Heart right ventricle (tissue), 16 donors: ENCODE measurements at regions of chr4 and their contacts with region 1.

Region 1: DNA sequence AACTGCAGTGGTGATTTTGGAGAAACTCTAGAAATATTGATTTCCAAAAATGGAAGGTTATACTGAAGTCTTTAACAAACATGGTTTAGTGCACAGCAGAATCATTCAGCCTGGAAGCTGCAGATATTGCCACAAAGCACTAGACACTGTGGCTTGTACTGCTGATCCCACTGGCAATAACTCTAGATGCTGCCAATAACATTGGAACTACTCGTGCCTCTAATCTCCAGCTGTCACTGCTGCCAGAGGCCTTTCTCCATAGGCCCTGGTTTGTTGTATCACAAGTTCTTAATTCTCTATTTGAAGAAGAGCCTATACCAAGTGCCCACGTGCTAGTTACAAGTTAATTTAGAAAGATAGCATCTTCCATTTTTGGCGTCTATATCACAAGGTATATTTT is 19.3 kb downstream of the DMP1 start:
- DNase-seq: no peak
- ATAC-seq: no peak
- H3K4me3 ChIP-seq: no peak overlapping the region
- H3K27ac ChIP-seq: no peak overlapping the region
- H3K4me1 ChIP-seq: no peaks in the 10 kb centered on the region
- H3K27me3 ChIP-seq: no peaks in the 10 kb centered on the region
- CTCF ChIP-seq: no peak

Region 2: DNA sequence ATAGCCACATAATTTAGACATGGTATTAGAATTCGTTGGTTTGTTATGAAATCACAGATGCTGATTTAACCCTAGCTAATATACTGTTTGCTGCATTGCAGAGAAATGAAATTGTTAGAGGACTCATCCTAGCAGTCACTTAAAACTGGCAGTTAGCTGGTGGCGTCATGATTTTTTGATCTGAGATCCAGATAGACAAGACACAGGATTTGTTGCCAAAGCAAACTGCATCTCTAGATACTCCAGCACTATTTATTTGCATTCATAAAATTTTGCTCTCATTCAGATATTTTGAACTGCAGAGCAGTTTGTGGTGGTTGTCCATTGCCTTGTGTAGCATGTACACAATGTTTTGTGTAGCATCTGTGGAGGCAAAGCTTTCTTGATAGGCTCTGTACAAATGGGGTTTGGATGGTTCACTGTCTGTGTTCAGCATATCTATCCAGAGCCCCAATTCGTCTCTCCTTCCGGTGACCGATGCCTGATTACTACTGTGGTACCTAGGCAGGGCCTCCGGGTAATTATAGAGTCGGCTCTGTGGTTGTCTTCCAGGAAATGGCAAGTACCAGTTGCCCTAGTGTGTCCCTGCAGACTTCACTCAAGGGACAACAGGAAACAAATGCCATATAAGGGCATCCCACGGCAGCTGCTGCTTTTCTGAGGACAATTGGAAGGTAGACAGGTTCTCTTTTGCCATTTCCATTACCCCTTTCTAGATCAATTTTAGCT is 110.1 kb before region 1 on chr4:
- intact Hi-C with region 1: loop called in 2 of 10 experiments (anchors 10 kb)
- DNase-seq: no peak
- ATAC-seq: peak in 3 of 8 donors; percentile 30 to 66 (median 41)
- H3K4me3 ChIP-seq: no peak overlapping the region
- H3K27ac ChIP-seq: no peak overlapping the region
- H3K4me1 ChIP-seq: peaks cover 0 to 15% (median 5%) of the 10 kb centered on the region in 9 donors
- H3K27me3 ChIP-seq: no peaks in the 10 kb centered on the region
- CTCF ChIP-seq: no peak

Region 3: DNA sequence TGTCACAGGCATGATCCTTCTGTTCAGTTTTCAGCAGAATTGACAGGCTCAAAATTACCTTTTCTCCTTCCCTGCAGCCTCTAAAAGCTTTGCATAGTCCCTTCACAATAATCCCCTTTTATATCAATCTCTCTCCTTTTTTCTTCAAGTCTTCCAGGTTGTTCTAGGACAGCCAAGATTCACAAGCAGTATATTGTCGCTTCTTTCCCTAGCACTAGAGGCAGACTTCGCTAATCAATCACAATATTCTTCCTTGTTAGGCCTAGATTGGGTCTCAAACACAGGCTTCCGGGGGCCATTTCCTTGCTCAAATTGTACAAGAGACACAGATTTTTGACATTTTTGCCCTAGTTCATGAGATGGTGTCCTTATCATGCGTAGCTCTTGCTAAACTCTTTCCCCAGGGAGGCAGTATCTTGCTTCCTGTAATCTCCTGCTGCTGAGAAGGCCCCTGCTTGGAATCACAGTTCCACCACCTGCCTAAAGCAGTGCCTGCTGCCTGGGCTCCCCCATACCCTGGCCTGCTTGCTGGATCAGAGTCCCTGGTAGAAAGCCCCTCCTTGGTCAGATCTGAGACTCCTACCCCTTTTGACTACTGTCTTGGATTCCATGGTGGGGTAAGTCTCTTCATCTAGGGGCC is 38.0 kb after region 1 on chr4:
- intact Hi-C with region 1: no loop called
- DNase-seq: no peak
- ATAC-seq: peak in 1 of 8 donors; percentile 68
- H3K4me3 ChIP-seq: no peak overlapping the region
- H3K27ac ChIP-seq: peak overlapping the region in 1 of 10 donors; percentile 20
- H3K4me1 ChIP-seq: peaks cover 0 to 3% (median 0%) of the 10 kb centered on the region in 9 donors
- H3K27me3 ChIP-seq: no peaks in the 10 kb centered on the region
- CTCF ChIP-seq: no peak

Region 4: GRCh38 chr4:87799301-87800113 is 130.1 kb after region 1 on chr4 and contains the start of gene IBSP:
- intact Hi-C with region 1: no loop called
- DNase-seq: no peak
- ATAC-seq: no peak
- H3K4me3 ChIP-seq: no peak within 1 kb of the TSS
- H3K27ac ChIP-seq: no peak within 1 kb of the TSS
- H3K4me1 ChIP-seq: no peaks in the 10 kb centered on the region
- H3K27me3 ChIP-seq: no peaks in the 10 kb centered on the region
- CTCF ChIP-seq: no peak
- total RNA-seq, gene IBSP: 0.16 TPM in 1 of 10 donors, not detected in the others